ENCODE measurements at regions of chr2 and their contacts with region 1.

Region 1: DNA sequence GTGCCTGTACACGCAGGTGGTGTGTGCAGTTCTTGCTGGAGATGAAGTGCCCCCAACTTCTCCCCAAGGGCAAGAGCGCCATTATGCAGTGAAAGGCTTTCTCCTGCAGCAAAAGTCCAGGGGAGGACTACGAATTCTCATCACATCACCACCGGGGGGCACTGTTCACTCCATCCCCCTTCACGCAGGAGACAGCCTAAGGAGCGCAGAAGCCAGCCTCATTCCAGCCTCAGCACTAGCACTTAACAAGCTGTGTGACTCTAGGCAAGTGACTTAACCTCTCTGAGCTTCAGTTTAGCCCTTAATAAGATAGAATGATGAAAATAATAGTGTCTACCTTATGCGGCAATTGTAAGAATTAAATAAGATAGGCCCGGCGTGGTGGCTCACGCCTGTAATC is 32.3 kb downstream of the DNMT3A start:
- DNase-seq: peak; percentile 48 to 70 (median 62)
- ATAC-seq: peak; percentile 72
- H3K4me3 ChIP-seq: no peak overlapping the region
- H3K4me3 Mint-ChIP-seq: peak overlapping the region in 5 of 10 donors; percentile 13 to 47 (median 28)
- H3K27ac ChIP-seq: no peak overlapping the region
- H3K27ac Mint-ChIP-seq: peak overlapping the region in 8 of 9 donors; percentile 36 to 89 (median 66)
- H3K4me1 ChIP-seq: peaks cover 21 to 60% of the 10 kb centered on the region in 2 donors
- H3K4me1 Mint-ChIP-seq: peaks cover 48 to 95% (median 80%) of the 10 kb centered on the region in 7 donors
- H3K27me3 ChIP-seq: no peaks in the 10 kb centered on the region
- H3K27me3 Mint-ChIP-seq: no peaks in the 10 kb centered on the region

Region 2: DNA sequence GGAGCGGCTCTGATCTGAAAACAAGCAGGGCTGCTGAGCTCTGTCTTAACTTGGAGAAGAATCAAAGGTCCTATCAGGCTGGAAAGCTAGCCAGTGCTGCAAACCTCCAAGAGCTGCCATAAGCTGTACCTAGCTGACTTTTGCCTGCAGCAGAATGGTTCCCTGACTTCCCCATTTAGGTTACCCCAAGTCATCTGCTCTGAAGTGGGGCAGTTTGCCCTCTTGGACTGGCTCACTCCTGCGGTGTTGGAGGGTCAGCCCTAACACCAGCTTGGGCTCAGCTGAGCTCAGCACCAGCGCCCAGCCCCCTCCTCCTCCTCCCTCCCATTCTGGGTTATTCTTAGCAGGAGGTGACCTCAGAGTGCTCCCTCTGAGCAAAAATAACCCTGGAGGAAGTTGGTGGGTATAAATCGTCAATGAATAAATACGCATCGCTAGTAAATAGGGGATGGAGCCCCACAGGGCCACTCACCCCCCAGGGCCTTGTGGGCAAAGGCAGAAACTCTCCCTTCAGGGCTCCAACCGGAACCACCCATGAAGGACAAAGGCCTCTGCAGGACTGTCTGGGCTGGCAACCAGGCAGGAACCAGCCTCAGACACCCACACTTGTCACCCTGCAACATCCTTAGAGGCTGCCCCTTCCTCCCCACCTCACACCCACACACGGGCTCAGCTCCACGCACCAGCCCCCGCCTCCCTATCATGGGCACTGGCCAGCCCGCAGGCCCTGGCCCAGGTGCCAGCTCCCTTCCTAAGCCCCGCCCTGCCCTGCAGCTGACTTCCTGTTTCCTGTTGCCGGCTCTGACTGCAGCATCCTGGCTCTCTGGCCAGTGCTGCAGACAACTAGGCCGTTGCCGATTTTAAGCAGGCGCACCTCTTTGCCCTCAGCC is 14.6 kb before region 1 on chr2:
- CTCF ChIA-PET with region 1: interaction called, 22 read pairs
- POLR2A ChIA-PET with region 1: interaction called, 24 read pairs
- intact Hi-C with region 1: loop called in 1 of 2 experiments (anchors 2 kb)
- DNase-seq: peak; percentile 51 to 79 (median 73)
- ATAC-seq: peak; percentile 89
- H3K4me3 ChIP-seq: peak overlapping the region; percentile 46
- H3K4me3 Mint-ChIP-seq: peak overlapping the region; percentile 72 to 85 (median 82)
- H3K27ac ChIP-seq: peak overlapping the region; percentile 81
- H3K27ac Mint-ChIP-seq: peak overlapping the region; percentile 90 to 99 (median 97)
- H3K4me1 ChIP-seq: peaks cover 31 to 61% of the 10 kb centered on the region in 2 donors
- H3K4me1 Mint-ChIP-seq: peaks cover 39 to 75% (median 55%) of the 10 kb centered on the region in 7 donors
- H3K27me3 ChIP-seq: no peaks in the 10 kb centered on the region
- H3K27me3 Mint-ChIP-seq: no peaks in the 10 kb centered on the region

Region 3: GRCh38 chr2:25337276-25337675 is 27.9 kb after region 1 on chr2:
- CTCF ChIA-PET with region 1: interaction called, 18 read pairs
- POLR2A ChIA-PET with region 1: interaction called, 6 read pairs
- intact Hi-C with region 1: loop called (anchors 1 kb)
- DNase-seq: peak in 2 of 9 donors; percentile 35 to 46
- ATAC-seq: no peak
- H3K4me3 ChIP-seq: no peak overlapping the region
- H3K4me3 Mint-ChIP-seq: peak overlapping the region; percentile 21 to 84 (median 66)
- H3K27ac ChIP-seq: peak overlapping the region; percentile 69
- H3K27ac Mint-ChIP-seq: peak overlapping the region; percentile 62 to 96 (median 76)
- H3K4me1 ChIP-seq: peaks cover 13 to 67% of the 10 kb centered on the region in 2 donors
- H3K4me1 Mint-ChIP-seq: peaks cover 54 to 76% (median 70%) of the 10 kb centered on the region in 7 donors
- H3K27me3 ChIP-seq: no peaks in the 10 kb centered on the region
- H3K27me3 Mint-ChIP-seq: no peaks in the 10 kb centered on the region

Region 4: DNA sequence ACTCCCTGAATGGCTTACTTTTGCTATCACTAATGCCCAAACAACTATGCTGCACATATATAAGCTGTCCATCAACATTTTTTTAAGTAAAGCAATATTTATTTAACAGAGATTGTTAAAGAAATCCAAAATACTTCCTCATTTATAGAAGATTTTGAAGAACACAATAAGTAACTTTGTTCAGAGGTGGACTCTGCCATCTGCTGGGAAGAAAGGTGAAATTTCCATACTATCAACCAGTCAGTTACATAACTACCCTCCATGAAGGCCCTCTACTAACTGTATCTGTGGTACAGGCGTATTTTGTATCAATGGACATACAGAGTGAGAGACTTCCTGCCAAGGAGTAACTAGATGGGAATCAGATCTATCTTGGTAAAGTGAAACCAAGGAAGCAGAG is 258.0 kb after region 1 on chr2:
- CTCF ChIA-PET with region 1: no interaction called
- POLR2A ChIA-PET with region 1: no interaction called
- intact Hi-C with region 1: loop called in 1 of 2 experiments (anchors 1 kb)
- DNase-seq: peak in 4 of 9 donors; percentile 6 to 27 (median 16)
- ATAC-seq: peak; percentile 67
- H3K4me3 ChIP-seq: no peak overlapping the region
- H3K4me3 Mint-ChIP-seq: no peak overlapping the region
- H3K27ac ChIP-seq: no peak overlapping the region
- H3K27ac Mint-ChIP-seq: peak overlapping the region in 1 of 9 donors; percentile 47
- H3K4me1 ChIP-seq: no peaks in the 10 kb centered on the region
- H3K4me1 Mint-ChIP-seq: peaks cover 0 to 14% (median 4%) of the 10 kb centered on the region in 7 donors
- H3K27me3 ChIP-seq: no peaks in the 10 kb centered on the region
- H3K27me3 Mint-ChIP-seq: no peaks in the 10 kb centered on the region

Measured in naive thymus-derived CD4-positive, alpha-beta T cell (primary cell).